B cell (primary cell): ENCODE measurements at regions of chr9 and their contacts with region 1.

Region 1: DNA sequence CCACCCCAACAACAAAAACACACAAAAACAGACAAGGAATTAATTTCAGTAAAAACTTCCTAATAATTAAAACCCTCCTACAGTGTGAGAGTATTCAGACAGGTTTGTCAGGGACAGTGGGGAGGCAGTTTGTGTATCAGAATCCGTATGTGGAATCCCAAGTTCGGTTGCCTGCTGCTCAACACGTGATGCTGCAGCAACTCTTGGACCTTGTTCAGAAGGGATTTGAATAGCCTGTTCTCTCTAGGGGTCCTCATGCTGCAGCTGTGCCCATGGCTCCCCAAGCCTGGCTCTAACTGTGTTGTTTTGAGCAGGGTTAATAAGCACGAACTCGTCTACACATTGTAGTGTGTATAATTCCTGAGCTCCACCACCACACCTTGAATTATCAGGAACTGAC is 28.7 kb downstream of the TLE4 start:
- DNase-seq: no peak
- ATAC-seq: no peak
- H3K4me3 ChIP-seq: no peak overlapping the region
- H3K4me3 Mint-ChIP-seq: no peak overlapping the region
- H3K27ac ChIP-seq: no peak overlapping the region
- H3K27ac Mint-ChIP-seq: no peak overlapping the region
- H3K4me1 ChIP-seq: peaks cover 6 to 16% of the 10 kb centered on the region in 2 donors
- H3K4me1 Mint-ChIP-seq: peaks cover 35% of the 10 kb centered on the region
- H3K27me3 ChIP-seq: no peaks in the 10 kb centered on the region
- H3K27me3 Mint-ChIP-seq: no peaks in the 10 kb centered on the region
- CTCF ChIP-seq: no peak

Region 2: GRCh38 chr9:78909566-78909965 is 690.9 kb before region 1 on chr9:
- CTCF ChIA-PET with region 1: no interaction called
- POLR2A ChIA-PET with region 1: no interaction called
- intact Hi-C with region 1: no loop called
- DNase-seq: no peak
- ATAC-seq: no peak
- H3K4me3 ChIP-seq: no peak overlapping the region
- H3K4me3 Mint-ChIP-seq: no peak overlapping the region
- H3K27ac ChIP-seq: no peak overlapping the region
- H3K27ac Mint-ChIP-seq: no peak overlapping the region
- H3K4me1 ChIP-seq: no peaks in the 10 kb centered on the region
- H3K4me1 Mint-ChIP-seq: no peaks in the 10 kb centered on the region
- H3K27me3 ChIP-seq: no peaks in the 10 kb centered on the region
- H3K27me3 Mint-ChIP-seq: no peaks in the 10 kb centered on the region
- CTCF ChIP-seq: no peak

Region 3: GRCh38 chr9:79583952-79584654 is 16.4 kb before region 1 on chr9:
- CTCF ChIA-PET with region 1: interaction called, 3 read pairs
- POLR2A ChIA-PET with region 1: no interaction called
- intact Hi-C with region 1: loop called (anchors 2 kb)
- DNase-seq: peak; percentile 35
- ATAC-seq: peak; percentile 69
- H3K4me3 ChIP-seq: no peak overlapping the region
- H3K4me3 Mint-ChIP-seq: peak overlapping the region; percentile 26
- H3K27ac ChIP-seq: no peak overlapping the region
- H3K27ac Mint-ChIP-seq: peak overlapping the region; percentile 12
- H3K4me1 ChIP-seq: peaks cover 23 to 30% of the 10 kb centered on the region in 2 donors
- H3K4me1 Mint-ChIP-seq: peaks cover 63% of the 10 kb centered on the region
- H3K27me3 ChIP-seq: no peaks in the 10 kb centered on the region
- H3K27me3 Mint-ChIP-seq: no peaks in the 10 kb centered on the region
- CTCF ChIP-seq: no peak